ENCODE measurements at regions of chr1 and their contacts with region 1.

Region 1: DNA sequence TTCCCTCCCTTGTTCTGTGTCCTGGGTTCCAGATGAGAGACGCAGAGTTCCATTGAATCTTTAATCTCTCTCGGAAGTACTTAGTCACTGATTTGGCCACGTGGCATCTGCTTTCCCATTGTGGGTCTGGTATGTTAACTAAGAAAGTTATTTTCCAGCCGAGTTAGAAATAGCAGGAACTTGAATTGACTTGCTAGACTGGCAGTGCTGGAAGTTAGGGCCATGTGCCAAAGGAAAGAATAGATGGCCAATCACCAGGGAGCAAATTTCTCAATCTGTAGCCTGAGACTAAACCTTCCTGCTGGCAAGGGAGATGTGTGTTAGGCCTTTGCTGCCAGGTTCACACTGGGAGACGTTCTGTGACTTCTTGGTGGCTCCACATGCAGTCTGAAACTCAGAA is 24.2 kb upstream of the SLFNL1 start:
- DNase-seq: no peak
- ATAC-seq: no peak
- H3K4me3 ChIP-seq: no peak overlapping the region
- H3K27ac ChIP-seq: no peak overlapping the region
- H3K4me1 ChIP-seq: no peaks in the 10 kb centered on the region
- H3K27me3 ChIP-seq: no peaks in the 10 kb centered on the region
- CTCF ChIP-seq: no peak

Region 2: GRCh38 chr1:41093826-41094225 is 48.1 kb after region 1 on chr1:
- CTCF ChIA-PET with region 1: interaction called, 13 read pairs
- POLR2A ChIA-PET with region 1: no interaction called
- in situ Hi-C with region 1: no loop called
- intact Hi-C with region 1: no loop called
- DNase-seq: no peak
- ATAC-seq: no peak
- H3K4me3 ChIP-seq: no peak overlapping the region
- H3K27ac ChIP-seq: no peak overlapping the region
- H3K4me1 ChIP-seq: no peaks in the 10 kb centered on the region
- H3K27me3 ChIP-seq: no peaks in the 10 kb centered on the region
- CTCF ChIP-seq: no peak